Aorta (tissue), 5 donors: ENCODE measurements at regions of chr15 and their contacts with region 1.

Region 1: DNA sequence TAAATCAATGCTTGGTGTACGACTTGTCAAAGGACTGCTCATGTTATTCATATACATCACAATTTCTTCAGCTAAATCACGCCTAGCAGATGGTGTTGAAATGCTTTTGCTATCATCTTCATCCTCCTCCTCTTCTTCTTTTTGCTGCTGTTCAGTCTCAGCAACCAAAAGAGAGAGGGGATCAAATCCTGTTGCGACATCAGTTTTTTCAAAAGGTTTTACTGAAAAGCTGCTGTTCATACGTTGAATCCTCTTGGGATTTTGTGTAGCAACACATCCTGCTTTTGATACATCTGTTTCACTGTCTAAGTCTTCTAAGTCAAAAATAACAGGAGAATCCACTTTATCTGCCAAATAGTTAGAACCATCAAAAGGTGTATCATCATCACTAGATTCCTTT is 69.0 kb downstream of the SLC24A1 start:
- DNase-seq: no peak
- ATAC-seq: no peak
- H3K4me3 ChIP-seq: no peak overlapping the region
- H3K27ac ChIP-seq: no peak overlapping the region
- H3K4me1 ChIP-seq: no peaks in the 10 kb centered on the region
- H3K27me3 ChIP-seq: no peaks in the 10 kb centered on the region

Region 2: DNA sequence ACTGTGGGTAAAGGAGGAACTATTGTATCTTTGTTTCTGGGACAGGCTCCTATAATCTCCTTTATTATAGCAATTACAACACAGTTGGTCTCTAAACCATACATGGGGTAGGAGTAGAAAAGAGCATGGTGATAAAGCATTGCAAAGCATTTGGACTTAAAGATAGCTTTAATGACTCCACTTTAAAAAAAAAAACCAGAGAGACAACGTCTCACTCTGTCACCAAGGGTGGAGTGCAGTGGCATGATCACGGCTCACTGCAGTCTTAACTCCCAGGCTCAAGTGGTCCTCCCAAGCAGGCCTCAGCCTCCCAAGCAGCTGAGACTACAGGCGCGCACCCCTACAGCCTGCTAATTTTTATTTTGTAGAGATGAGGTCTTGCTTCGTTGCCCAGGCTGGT is 33.1 kb after region 1 on chr15:
- intact Hi-C with region 1: no loop called
- DNase-seq: no peak
- ATAC-seq: no peak
- H3K4me3 ChIP-seq: no peak overlapping the region
- H3K27ac ChIP-seq: no peak overlapping the region
- H3K4me1 ChIP-seq: no peaks in the 10 kb centered on the region
- H3K27me3 ChIP-seq: no peaks in the 10 kb centered on the region

Region 3: DNA sequence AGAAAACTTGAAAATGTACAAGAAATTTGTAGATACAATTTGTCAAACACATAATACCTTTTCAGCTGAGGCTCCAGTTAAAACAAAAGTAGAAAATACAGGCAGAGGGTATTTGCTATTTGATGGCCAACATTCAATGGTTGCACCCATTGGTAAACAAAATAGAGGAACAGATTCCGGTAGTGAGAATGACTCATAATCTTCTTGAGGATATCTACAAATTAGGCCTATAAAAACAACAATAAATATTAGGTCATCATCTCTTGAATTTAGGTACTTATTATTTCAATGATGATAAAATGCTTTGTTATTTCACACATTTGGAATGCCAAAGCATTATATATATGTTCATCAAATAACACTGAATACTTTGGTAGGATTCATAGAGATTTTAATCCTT is 47.9 kb after region 1 on chr15:
- intact Hi-C with region 1: loop called in 1 of 2 experiments (anchors 2 kb)
- DNase-seq: no peak
- ATAC-seq: no peak
- H3K4me3 ChIP-seq: no peak overlapping the region
- H3K27ac ChIP-seq: no peak overlapping the region
- H3K4me1 ChIP-seq: no peaks in the 10 kb centered on the region
- H3K27me3 ChIP-seq: no peaks in the 10 kb centered on the region